ENCODE measurements at regions of chr15 and their contacts with region 1.

Region 1: DNA sequence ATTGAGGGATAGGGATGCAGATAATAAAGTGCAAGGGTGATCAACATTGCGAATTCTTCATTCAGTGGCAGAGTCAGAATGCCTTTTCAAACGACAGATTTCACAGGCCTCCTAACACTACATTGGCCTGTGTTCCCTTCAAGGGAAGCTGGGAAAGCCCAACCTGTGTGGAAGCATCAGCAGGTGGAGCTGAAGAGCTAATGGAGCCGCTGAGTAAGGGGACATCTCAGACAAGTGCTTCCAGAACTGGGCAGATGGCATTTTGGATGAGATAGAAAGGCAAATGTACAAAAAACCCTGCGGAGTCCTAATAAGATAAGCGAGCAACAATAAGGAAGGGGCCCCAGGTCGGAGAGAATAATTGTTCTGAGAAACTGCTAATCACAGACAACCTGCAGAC is 8.5 kb upstream of the SLC24A5 start:
- DNase-seq: no peak
- H3K4me3 Mint-ChIP-seq: no peak overlapping the region
- H3K27ac Mint-ChIP-seq: no peak overlapping the region
- H3K4me1 Mint-ChIP-seq: no peaks in the 10 kb centered on the region
- H3K27me3 Mint-ChIP-seq: peaks cover 13% of the 10 kb centered on the region

Region 2: GRCh38 chr15:48250640-48251076 is 138.4 kb after region 1 on chr15:
- intact Hi-C with region 1: loop called (anchors 2 kb)
- DNase-seq: peak; percentile 68
- H3K4me3 Mint-ChIP-seq: no peak overlapping the region
- H3K27ac Mint-ChIP-seq: no peak overlapping the region
- H3K4me1 Mint-ChIP-seq: no peaks in the 10 kb centered on the region
- H3K27me3 Mint-ChIP-seq: peaks cover 4% of the 10 kb centered on the region

Region 3: DNA sequence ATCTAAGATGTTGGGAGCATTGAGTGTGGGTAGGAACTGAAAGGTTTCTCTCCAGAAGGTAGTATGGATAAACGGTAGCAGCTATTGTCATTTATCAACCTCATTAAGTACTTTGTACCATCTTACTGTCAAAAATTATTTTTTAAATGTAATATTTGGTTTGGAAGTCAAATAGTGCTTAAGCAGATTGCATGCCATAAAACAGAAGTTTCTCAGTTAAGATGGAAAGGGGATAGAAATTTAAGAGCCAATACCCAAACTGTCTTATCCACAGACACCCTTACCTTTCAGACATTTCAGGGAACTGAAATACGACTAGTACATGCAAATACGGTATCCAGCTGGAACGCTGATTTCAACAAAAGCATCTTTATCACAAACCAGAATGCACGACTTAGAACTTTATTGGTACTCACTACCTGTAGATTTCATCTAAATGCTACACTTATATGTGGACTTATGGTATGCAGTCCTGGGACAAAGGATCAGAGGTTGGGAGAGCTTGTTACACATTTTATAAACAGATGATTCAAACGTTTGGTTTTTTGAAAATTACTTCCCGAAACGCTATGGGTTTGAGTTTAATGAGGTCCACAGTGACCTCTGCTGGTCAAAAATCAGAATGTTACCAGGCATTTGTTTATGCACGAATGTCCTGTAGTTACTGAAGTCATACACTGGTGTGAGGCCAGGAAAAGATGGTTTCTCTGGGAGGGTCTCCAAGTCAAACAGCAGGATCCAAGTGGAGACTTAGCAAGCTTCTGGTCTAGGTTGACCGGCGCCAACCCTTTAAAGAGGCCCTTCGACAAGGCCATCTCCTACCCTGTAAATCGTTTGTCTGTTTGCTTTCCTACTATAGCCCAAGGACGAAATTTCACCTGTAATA is 173.3 kb after region 1 on chr15:
- intact Hi-C with region 1: loop called (anchors 10 kb)
- DNase-seq: peak; percentile 85
- H3K4me3 Mint-ChIP-seq: no peak overlapping the region
- H3K27ac Mint-ChIP-seq: no peak overlapping the region
- H3K4me1 Mint-ChIP-seq: peaks cover 5% of the 10 kb centered on the region
- H3K27me3 Mint-ChIP-seq: peaks cover 10% of the 10 kb centered on the region

Measured in activated CD4-positive, alpha-beta T cell treated with anti-CD3 and anti-CD28 coated beads, Interleukin-2, amount 10 ng/mL, durations not matched to agents 24 days and 14 days (primary cell).